Right ventricle myocardium inferior (tissue), 1 donor: ENCODE measurements at regions of chr7 and their contacts with region 1.

Region 1: GRCh38 chr7:68425377-68425776 is 1172.9 kb upstream of the AUTS2 start:
- DNase-seq: no peak
- ATAC-seq: no peak

Region 2: GRCh38 chr7:68185631-68186456 is 239.5 kb before region 1 on chr7:
- intact Hi-C with region 1: loop called (anchors 10 kb)
- DNase-seq: no peak
- ATAC-seq: no peak

Region 3: DNA sequence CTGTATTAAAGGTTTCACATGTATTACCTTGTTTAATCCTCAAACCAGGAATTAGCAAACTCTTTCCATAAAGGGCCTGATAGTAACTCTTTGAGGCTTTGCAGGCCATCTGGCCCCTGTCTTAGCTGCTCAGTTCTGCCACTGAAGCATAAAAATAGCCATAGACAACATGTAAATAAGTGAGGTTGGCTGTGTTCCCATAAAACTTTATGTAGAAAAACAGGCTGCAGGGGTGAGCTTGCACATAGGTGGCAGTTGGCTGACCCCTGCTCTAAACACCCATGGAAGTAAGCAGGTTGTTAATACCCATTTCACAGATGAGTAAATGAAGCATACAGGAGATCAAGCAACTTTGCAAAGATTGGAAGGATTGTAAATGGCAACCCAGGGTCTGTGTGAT is 106.3 kb before region 1 on chr7:
- intact Hi-C with region 1: loop called (anchors 2 kb)
- DNase-seq: no peak
- ATAC-seq: no peak